HCT116 (cell line): ENCODE measurements at regions of chr2 and their contacts with region 1.

Region 1: DNA sequence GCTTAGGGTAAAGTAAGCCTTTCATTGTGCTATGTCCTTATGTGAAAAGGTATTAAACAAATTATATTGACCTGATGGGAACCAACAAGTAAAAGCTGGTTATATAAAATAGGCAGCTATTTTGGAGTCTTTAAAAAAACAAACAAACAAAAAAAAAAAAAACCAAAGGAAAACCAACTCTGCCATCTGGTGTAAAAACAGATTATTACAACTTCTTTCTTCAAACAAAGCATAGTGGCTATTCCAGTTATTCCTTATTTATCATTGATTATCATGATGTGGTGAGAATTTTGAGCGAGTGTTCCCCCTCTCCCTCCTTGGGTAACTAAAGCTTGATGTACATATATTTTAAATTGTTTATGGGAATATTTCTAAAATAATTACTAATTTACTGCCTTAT is 122.4 kb upstream of the FHL2 start:
- DNase-seq: no peak
- ATAC-seq: 0 out of 2 replicates have a peak, but pooled peaks have one; percentile 39
- H3K4me3 ChIP-seq: no peak overlapping the region
- H3K27ac ChIP-seq: no peak overlapping the region
- H3K4me1 ChIP-seq: no peaks in the 10 kb centered on the region
- H3K27me3 ChIP-seq: no peaks in the 10 kb centered on the region
- CTCF ChIP-seq: peak; percentile 21 to 82 (median 63); a peak in 5 of 6 replicates
- POLR2A ChIP-seq: no peak
- RAD21 ChIP-seq: peak; percentile 85

Region 2: GRCh38 chr2:105287692-105288091 is 233.5 kb before region 1 on chr2:
- CTCF ChIA-PET with region 1: interaction called, 8 read pairs
- POLR2A ChIA-PET with region 1: no interaction called
- RAD21 ChIA-PET with region 1: interaction called, 4 to 6 read pairs
- intact Hi-C with region 1: loop called (anchors 1 kb)
- DNase-seq: peak; percentile 16
- ATAC-seq: peak; percentile 74
- H3K4me3 ChIP-seq: no peak overlapping the region
- H3K27ac ChIP-seq: no peak overlapping the region
- H3K4me1 ChIP-seq: no peaks in the 10 kb centered on the region
- H3K27me3 ChIP-seq: no peaks in the 10 kb centered on the region
- CTCF ChIP-seq: peak; percentile 42 to 65 (median 61); a peak in 5 of 6 replicates
- POLR2A ChIP-seq: no peak
- RAD21 ChIP-seq: peak; percentile 51

Region 3: DNA sequence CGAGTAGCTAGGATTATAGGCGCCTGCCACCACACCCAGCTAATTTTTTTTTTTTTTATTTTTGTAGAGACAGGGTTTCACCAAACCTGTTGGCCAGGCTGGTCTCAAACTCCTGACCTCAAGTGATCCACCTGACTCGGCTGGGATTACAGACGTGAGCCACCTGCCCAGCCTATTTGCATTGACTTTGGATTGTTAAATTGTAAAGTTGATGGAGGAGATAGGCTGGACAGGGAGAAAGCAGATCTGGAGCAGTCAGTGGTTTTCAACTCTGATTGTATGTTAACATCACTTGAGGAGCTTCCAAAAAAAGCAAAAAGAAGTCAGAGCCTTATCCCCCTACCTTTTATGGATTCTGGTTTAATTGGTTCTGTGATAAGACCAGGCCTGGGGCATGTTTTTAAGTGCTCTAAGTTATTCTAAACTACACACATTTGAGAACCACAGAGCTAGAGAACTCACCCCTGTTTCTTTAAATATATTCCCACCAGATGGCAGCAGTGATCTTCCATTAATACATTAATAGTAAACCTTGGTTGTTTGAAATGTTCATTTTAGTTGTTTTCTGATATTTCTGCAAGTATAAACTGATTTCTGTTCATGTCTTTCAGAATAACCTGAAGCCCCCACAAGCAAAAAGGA is 176.4 kb before region 1 on chr2:
- CTCF ChIA-PET with region 1: interaction called, 48 read pairs
- POLR2A ChIA-PET with region 1: no interaction called
- RAD21 ChIA-PET with region 1: interaction called, 3 read pairs
- intact Hi-C with region 1: loop called (anchors 1 kb)
- DNase-seq: no peak
- ATAC-seq: peak; percentile 63; the same call in 1 of the 2 replicates
- H3K4me3 ChIP-seq: no peak overlapping the region
- H3K27ac ChIP-seq: no peak overlapping the region
- H3K4me1 ChIP-seq: no peaks in the 10 kb centered on the region
- H3K27me3 ChIP-seq: no peaks in the 10 kb centered on the region
- CTCF ChIP-seq: peak; percentile 36 to 60 (median 54); a peak in 5 of 6 replicates
- POLR2A ChIP-seq: no peak
- RAD21 ChIP-seq: peak; percentile 66

Region 4: DNA sequence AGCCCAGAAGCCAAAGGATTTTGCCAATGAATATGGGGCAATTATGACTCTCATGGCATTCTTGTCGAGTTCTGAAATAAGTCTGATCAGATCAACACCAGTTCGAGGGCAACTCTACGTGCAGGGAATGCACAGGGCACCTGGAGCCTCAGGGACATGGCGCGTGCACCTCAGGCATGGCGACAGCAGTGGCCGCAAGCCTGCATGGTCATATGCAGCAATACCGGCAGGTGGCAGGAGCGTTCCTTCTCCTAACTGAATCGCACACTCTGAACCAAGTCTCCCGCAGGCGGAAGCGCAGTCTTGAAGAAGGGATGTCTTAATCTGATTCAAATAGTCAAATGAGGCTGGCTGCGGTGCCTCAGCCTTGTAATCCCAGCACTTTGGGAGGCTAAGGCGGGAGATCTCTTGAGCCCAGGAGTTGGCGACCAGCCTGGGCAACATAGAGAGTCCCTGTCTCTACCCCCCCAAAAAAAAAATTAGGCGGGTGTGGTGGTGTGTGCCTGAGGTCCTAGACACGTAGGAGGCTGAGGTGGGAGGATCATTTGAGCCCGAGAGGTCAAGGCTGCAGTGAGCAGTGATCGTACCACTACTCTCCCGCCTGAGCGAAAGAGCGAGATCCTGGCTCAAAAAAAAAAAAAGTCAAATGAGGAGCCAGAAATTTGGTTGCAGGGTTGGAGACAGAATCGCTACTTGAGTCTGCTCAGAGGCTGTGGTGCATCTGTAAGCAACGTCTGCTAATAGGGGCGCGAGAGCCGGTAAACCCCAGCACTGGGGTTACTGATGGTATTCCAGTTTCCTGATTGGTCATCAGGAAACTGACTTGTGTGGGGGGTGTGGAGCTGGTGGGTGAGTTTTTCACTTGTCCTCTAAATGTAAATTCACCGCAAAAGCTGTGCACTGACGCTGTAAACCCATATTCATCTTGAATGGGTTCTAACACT is 151.2 kb before region 1 on chr2:
- CTCF ChIA-PET with region 1: interaction called, 5 read pairs
- POLR2A ChIA-PET with region 1: no interaction called
- RAD21 ChIA-PET with region 1: interaction called in 1 of 2 experiments, 4 read pairs
- intact Hi-C with region 1: loop called (anchors 1 kb)
- DNase-seq: peak; percentile 54
- ATAC-seq: peak; percentile 99
- H3K4me3 ChIP-seq: no peak overlapping the region
- H3K27ac ChIP-seq: no peak overlapping the region; the same call in 1 of the 2 replicates
- H3K4me1 ChIP-seq: no peaks in the 10 kb centered on the region
- H3K27me3 ChIP-seq: no peaks in the 10 kb centered on the region
- CTCF ChIP-seq: peak; percentile 79 to 80 (median 80)
- POLR2A ChIP-seq: no peak
- RAD21 ChIP-seq: peak; percentile 92

Region 5: GRCh38 chr2:105417857-105418436 is 103.3 kb before region 1 on chr2:
- CTCF ChIA-PET with region 1: no interaction called
- POLR2A ChIA-PET with region 1: no interaction called
- RAD21 ChIA-PET with region 1: no interaction called
- intact Hi-C with region 1: no loop called
- DNase-seq: no peak
- ATAC-seq: peak; percentile 58; the same call in 1 of the 2 replicates
- H3K4me3 ChIP-seq: no peak overlapping the region
- H3K27ac ChIP-seq: no peak overlapping the region
- H3K4me1 ChIP-seq: peaks cover 3 to 9% of the 10 kb centered on the region in 2 experiments; a peak in 3 of 4 replicates
- H3K27me3 ChIP-seq: no peaks in the 10 kb centered on the region
- CTCF ChIP-seq: no peak
- POLR2A ChIP-seq: no peak
- RAD21 ChIP-seq: no peak

Region 6: DNA sequence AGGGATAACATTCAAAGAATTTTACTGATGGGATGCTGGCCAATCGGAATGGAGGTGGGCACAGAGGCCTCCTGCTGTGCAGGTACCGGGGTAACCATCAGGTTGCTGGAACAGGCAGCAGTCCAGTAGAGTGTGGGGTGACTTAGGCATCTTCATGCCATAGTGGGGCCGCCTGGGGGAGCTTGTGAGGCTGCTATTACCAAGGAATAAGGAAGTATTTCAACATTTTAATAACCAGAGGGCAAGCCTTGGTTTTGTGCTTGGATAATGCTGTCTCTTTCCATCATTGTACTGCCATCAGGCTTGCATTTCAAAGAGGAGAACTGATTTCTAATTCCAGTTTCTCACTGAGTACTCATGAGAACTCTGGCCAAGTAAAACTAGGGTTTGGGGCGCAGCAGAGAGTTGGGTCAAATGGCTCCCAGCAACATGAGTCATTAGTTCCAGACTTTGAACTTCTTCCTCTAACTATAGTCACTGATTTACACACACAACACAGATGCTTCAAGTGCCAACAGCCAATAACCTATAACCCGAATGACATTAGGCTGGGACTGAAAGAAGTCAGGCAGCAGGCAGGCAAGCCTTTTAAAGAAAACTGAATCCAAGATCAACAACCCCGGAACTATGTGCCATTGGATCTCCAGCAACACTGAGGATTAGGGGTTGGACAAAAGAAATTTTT is 66.3 kb before region 1 on chr2:
- CTCF ChIA-PET with region 1: no interaction called
- POLR2A ChIA-PET with region 1: no interaction called
- RAD21 ChIA-PET with region 1: no interaction called
- intact Hi-C with region 1: loop called (anchors 2 kb)
- DNase-seq: peak; percentile 69
- ATAC-seq: peak; percentile 82
- H3K4me3 ChIP-seq: peak overlapping the region in 1 of 2 experiments; percentile 34
- H3K27ac ChIP-seq: peak overlapping the region; percentile 48
- H3K4me1 ChIP-seq: peaks cover 19 to 23% of the 10 kb centered on the region in 2 experiments
- H3K27me3 ChIP-seq: no peaks in the 10 kb centered on the region
- CTCF ChIP-seq: peak; percentile 29 to 64 (median 56); a peak in 5 of 6 replicates
- POLR2A ChIP-seq: no peak
- RAD21 ChIP-seq: peak; percentile 47

Region 7: DNA sequence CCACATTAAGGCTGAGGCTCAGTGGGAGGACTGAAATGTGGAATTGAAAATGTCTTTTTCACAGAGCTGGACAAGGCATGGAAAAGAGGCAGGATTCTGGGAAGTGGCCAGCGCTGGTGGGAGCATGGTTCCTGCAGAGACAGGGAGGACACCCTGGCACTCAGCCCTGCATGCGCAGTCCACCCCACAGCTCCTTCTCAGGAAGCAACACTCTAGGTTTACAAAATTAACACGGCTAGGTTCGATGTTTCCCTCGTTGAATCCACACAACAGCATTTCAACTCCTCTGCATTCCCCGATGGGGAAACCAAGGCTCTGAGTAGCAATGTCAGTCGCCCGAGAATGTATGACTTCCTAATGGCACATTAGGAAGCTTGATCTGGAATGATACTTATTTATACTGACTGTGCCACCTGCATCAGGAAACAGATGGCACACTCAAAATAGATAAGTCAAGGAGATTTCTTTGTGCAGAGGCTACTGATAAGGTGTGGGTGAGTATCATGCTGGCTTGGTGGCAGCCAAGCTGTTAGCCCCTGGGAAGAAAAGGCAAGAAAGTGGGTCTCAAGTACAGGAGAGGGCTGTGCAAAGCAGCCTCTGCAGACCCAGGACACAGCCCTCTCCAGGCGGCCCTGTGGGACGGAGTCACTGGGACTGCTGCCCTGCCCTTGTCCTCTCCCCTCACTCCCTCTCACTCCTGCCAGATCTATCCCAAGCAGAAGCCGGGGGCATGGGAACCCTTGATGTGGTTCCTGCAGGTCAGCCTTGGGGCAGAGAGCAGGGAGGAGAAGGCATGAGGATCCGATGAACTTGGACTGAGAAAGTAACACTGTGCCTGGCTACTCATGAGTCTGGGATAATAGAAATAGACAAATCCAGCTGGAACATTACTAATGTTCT is 36.1 kb after region 1 on chr2:
- CTCF ChIA-PET with region 1: no interaction called
- POLR2A ChIA-PET with region 1: no interaction called
- RAD21 ChIA-PET with region 1: no interaction called
- intact Hi-C with region 1: no loop called
- DNase-seq: no peak
- ATAC-seq: no peak
- H3K4me3 ChIP-seq: no peak overlapping the region
- H3K27ac ChIP-seq: no peak overlapping the region
- H3K4me1 ChIP-seq: peaks cover 10 to 17% of the 10 kb centered on the region in 2 experiments
- H3K27me3 ChIP-seq: peaks cover 61% of the 10 kb centered on the region
- CTCF ChIP-seq: no peak
- POLR2A ChIP-seq: no peak
- RAD21 ChIP-seq: no peak